ENCODE measurements at regions of chr17 and their contacts with region 1.

Region 1: DNA sequence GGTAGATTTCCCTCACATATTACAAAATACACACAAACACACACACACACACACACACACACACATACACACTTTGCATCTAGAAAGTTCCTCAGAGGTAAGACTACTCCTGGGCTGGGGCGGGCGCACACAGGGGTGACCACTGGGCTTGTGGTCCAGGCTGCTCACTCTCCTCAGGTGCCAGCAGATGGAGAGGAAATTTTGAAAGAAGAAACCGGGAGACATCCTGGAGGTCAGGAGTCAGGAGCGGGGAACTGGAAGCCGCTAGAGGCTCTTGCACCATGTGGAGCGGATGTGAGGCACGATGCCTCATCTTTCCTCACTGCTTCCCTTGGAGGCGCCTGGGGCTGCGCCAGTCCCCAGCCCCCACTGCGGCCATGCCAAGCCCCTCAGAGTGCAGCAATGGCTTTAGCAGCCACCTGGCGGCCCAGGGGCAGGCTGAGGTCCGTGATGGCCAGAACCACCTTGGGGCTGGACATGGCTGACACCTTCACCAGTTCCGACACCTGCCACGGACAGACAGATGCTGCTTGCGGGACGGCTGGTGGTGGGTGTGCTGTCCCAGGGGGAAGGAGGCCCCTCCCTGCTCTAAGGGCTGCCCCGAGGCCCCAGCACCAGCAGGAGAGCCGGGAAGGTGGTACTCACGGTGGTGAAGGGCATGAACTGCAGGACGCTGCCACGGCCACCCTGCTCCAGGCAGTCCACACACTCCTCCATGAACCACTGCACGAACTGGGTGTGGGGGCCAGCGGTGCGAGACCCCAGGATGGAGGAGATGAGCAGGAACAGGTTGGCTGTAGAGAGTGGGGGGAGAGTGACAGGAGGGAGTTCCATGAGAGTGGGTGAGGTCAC is 4.1 kb downstream of the CSF3 start:
- DNase-seq: no peak

Region 2: GRCh38 chr17:40086150-40087044 is 67.0 kb after region 1 on chr17:
- intact Hi-C with region 1: loop called (anchors 10 kb)
- DNase-seq: peak in 21 of 42 donors; percentile 14 to 87 (median 66)

Region 3: GRCh38 chr17:40191237-40192208 is 172.2 kb after region 1 on chr17:
- intact Hi-C with region 1: loop called (anchors 10 kb)
- DNase-seq: peak; percentile 61 to 91 (median 80)

Measured in head of caudate nucleus (tissue), 42 donors.